ENCODE measurements at regions of chr2 and their contacts with region 1.

Region 1: GRCh38 chr2:105521205-105521604 is 122.4 kb upstream of the FHL2 start:
- DNase-seq: no peak
- H3K4me3 ChIP-seq: no peak overlapping the region
- H3K27ac ChIP-seq: no peak overlapping the region
- H3K4me1 ChIP-seq: peaks cover 0 to 9% of the 10 kb centered on the region in 2 donors
- H3K27me3 ChIP-seq: no peaks in the 10 kb centered on the region
- CTCF ChIP-seq: peak; percentile 34 to 88 (median 62)
- POLR2A ChIP-seq: no peak

Region 2: DNA sequence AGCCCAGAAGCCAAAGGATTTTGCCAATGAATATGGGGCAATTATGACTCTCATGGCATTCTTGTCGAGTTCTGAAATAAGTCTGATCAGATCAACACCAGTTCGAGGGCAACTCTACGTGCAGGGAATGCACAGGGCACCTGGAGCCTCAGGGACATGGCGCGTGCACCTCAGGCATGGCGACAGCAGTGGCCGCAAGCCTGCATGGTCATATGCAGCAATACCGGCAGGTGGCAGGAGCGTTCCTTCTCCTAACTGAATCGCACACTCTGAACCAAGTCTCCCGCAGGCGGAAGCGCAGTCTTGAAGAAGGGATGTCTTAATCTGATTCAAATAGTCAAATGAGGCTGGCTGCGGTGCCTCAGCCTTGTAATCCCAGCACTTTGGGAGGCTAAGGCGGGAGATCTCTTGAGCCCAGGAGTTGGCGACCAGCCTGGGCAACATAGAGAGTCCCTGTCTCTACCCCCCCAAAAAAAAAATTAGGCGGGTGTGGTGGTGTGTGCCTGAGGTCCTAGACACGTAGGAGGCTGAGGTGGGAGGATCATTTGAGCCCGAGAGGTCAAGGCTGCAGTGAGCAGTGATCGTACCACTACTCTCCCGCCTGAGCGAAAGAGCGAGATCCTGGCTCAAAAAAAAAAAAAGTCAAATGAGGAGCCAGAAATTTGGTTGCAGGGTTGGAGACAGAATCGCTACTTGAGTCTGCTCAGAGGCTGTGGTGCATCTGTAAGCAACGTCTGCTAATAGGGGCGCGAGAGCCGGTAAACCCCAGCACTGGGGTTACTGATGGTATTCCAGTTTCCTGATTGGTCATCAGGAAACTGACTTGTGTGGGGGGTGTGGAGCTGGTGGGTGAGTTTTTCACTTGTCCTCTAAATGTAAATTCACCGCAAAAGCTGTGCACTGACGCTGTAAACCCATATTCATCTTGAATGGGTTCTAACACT is 151.2 kb before region 1 on chr2:
- intact Hi-C with region 1: loop called (anchors 5 kb)
- DNase-seq: peak; percentile 83 to 95 (median 92)
- H3K4me3 ChIP-seq: no peak overlapping the region
- H3K27ac ChIP-seq: peak overlapping the region in 1 of 5 donors; percentile 94
- H3K4me1 ChIP-seq: peaks cover 13 to 20% of the 10 kb centered on the region in 2 donors
- H3K27me3 ChIP-seq: no peaks in the 10 kb centered on the region
- CTCF ChIP-seq: peak; percentile 87 to 97 (median 94)
- POLR2A ChIP-seq: no peak

Region 3: DNA sequence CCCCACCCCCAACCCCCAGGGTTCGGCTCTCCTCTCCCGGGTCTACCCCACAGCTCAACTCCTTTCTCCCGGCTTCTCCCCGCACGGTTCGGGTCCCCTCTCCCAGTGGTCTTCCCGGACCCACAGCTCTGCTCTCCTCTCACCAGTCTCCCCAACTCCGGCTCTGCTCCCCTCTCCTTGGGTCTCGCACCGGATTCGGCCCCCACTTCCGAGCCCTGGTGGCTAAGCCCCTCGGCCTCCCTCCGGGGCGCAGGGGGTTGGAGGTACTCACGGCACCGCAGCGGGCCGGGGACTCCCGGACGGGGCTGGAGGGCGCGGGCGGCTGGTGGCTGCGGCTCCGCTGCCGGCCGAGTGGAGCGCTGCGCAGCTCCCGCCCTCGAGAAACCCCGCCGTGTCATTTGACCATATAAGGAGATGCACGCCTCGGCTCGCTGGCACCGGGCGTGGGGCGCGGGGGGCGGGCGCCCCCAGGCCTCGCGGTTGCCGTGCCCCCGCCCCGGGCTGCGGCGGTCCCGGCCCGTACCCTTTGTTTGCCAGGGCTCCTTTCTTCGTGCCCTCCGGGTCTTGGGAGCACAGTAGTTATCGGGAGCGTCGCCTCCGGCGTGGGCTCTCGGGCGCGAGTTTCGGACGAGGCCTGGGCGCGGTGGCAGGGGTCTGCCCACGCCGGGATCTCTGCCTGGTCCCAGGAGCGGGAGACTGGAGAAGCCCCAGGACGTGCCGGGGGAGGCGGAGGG is 122.3 kb before region 1 on chr2 and contains the start of gene FHL2:
- intact Hi-C with region 1: no loop called
- DNase-seq: peak; percentile 68 to 81 (median 77)
- H3K4me3 ChIP-seq: peak within 1 kb of the TSS in 3 of 4 donors; percentile 83 to 89 (median 87)
- H3K27ac ChIP-seq: peak within 1 kb of the TSS; percentile 34 to 96 (median 83)
- H3K4me1 ChIP-seq: peaks cover 2 to 36% of the 10 kb centered on the region in 2 donors
- H3K27me3 ChIP-seq: no peaks in the 10 kb centered on the region
- CTCF ChIP-seq: peak; percentile 9 to 61 (median 46)
- POLR2A ChIP-seq: peak; percentile 83 to 92
- total RNA-seq, gene FHL2: 41.2 to 213 (median 135) TPM

Region 4: DNA sequence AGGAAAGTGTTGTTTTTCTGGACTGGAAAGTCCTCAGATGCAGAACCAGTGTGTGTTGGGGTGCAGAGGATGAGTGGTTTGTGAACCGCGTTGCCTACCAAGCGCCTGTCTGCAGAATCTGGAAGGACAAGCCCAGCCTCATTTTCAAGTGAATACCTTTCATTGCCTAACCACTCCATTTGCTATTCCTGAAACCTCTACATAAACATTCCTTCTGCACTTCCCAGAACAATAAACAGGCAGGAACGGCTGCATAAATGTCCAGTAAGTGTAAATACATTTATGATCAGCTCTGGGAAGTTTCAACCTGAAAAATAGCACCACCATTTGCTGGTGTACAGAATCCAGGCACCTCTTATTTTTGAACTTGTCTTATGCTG is 77.0 kb before region 1 on chr2:
- intact Hi-C with region 1: loop called in 1 of 2 experiments (anchors 5 kb)
- DNase-seq: no peak
- H3K4me3 ChIP-seq: no peak overlapping the region
- H3K27ac ChIP-seq: no peak overlapping the region
- H3K4me1 ChIP-seq: peaks cover under 1 to 6% of the 10 kb centered on the region in 2 donors
- H3K27me3 ChIP-seq: no peaks in the 10 kb centered on the region
- CTCF ChIP-seq: no peak
- POLR2A ChIP-seq: no peak

Region 5: GRCh38 chr2:105682401-105682800 is 161.2 kb after region 1 on chr2:
- intact Hi-C with region 1: no loop called
- DNase-seq: no peak
- H3K4me3 ChIP-seq: no peak overlapping the region
- H3K27ac ChIP-seq: no peak overlapping the region
- H3K4me1 ChIP-seq: no peaks in the 10 kb centered on the region
- H3K27me3 ChIP-seq: no peaks in the 10 kb centered on the region
- CTCF ChIP-seq: no peak
- POLR2A ChIP-seq: no peak

Measured in adrenal gland (tissue), 19 donors.